Naive thymus-derived CD4-positive, alpha-beta T cell (primary cell): ENCODE measurements at regions of chrX and their contacts with region 1.

Region 1: GRCh38 chrX:13013363-13014110 is 30.9 kb downstream of the FAM9C start:
- DNase-seq: peak in 5 of 9 donors; percentile 16 to 45 (median 34)
- ATAC-seq: peak; percentile 85
- H3K4me3 ChIP-seq: peak overlapping the region; percentile 31
- H3K4me3 Mint-ChIP-seq: peak overlapping the region; percentile 20 to 75 (median 58)
- H3K27ac ChIP-seq: peak overlapping the region; percentile 65
- H3K27ac Mint-ChIP-seq: peak overlapping the region; percentile 80 to 92 (median 87)
- H3K4me1 ChIP-seq: peaks cover 6 to 44% of the 10 kb centered on the region in 2 donors
- H3K4me1 Mint-ChIP-seq: peaks cover 16 to 80% (median 68%) of the 10 kb centered on the region in 7 donors
- H3K27me3 ChIP-seq: no peaks in the 10 kb centered on the region
- H3K27me3 Mint-ChIP-seq: no peaks in the 10 kb centered on the region

Region 2: DNA sequence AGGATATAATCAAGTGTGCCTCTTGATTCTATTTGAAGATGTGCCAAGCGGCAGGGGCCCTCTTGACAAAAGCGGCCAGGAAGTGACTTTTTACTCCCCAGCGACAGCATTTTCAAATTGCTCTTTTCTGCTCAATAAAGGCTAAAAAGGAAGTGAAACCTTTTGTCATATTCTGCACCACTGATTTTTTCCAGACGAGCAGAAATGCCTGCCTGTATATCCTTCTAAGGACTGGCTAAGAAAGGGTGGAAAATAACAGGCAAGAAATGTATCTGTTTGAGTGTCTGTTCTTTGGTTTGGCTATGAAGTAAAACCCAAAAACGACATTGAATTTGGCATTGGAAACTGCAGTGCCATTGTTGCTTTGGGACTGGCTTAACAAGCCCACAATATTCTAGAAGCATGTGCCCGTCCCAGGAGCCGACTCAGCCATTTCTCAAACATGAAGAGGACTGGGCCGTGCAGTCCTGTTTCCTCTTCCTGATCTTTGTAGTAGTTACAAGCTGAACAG is 13.2 kb before region 1 on chrX:
- CTCF ChIA-PET with region 1: interaction called, 3 read pairs
- POLR2A ChIA-PET with region 1: interaction called, 153 read pairs
- intact Hi-C with region 1: loop called (anchors 1 kb)
- DNase-seq: peak in 7 of 9 donors; percentile 46 to 74 (median 68)
- ATAC-seq: peak; percentile 65
- H3K4me3 ChIP-seq: peak overlapping the region; percentile 42
- H3K4me3 Mint-ChIP-seq: peak overlapping the region; percentile 70 to 86 (median 84)
- H3K27ac ChIP-seq: peak overlapping the region; percentile 77
- H3K27ac Mint-ChIP-seq: peak overlapping the region; percentile 83 to 98 (median 95)
- H3K4me1 ChIP-seq: peaks cover 66 to 68% of the 10 kb centered on the region in 2 donors
- H3K4me1 Mint-ChIP-seq: peaks cover 27 to 88% (median 74%) of the 10 kb centered on the region in 7 donors
- H3K27me3 ChIP-seq: no peaks in the 10 kb centered on the region
- H3K27me3 Mint-ChIP-seq: no peaks in the 10 kb centered on the region

Region 3: GRCh38 chrX:13051529-13052172 is 38.1 kb after region 1 on chrX:
- CTCF ChIA-PET with region 1: interaction called, 3 read pairs
- POLR2A ChIA-PET with region 1: interaction called, 15 read pairs
- intact Hi-C with region 1: no loop called
- DNase-seq: peak in 7 of 9 donors; percentile 69 to 87 (median 79)
- ATAC-seq: peak; percentile 84
- H3K4me3 ChIP-seq: peak overlapping the region; percentile 25
- H3K4me3 Mint-ChIP-seq: peak overlapping the region; percentile 46 to 80 (median 58)
- H3K27ac ChIP-seq: peak overlapping the region; percentile 74
- H3K27ac Mint-ChIP-seq: peak overlapping the region; percentile 93 to 96 (median 95)
- H3K4me1 ChIP-seq: peaks cover 39 to 85% of the 10 kb centered on the region in 2 donors
- H3K4me1 Mint-ChIP-seq: peaks cover 14 to 93% (median 81%) of the 10 kb centered on the region in 7 donors
- H3K27me3 ChIP-seq: no peaks in the 10 kb centered on the region
- H3K27me3 Mint-ChIP-seq: no peaks in the 10 kb centered on the region